Esophagus squamous epithelium (tissue), 5 donors: ENCODE measurements at regions of chr15 and their contacts with region 1.

Region 1: GRCh38 chr15:75229191-75230015 is 27.7 kb downstream of the C15orf39 start:
- DNase-seq: no peak
- H3K4me3 ChIP-seq: no peak overlapping the region
- H3K27ac ChIP-seq: no peak overlapping the region
- H3K4me1 ChIP-seq: no peaks in the 10 kb centered on the region
- H3K27me3 ChIP-seq: peaks cover 0 to 55% (median 0%) of the 10 kb centered on the region in 4 donors
- CTCF ChIP-seq: no peak
- POLR2A ChIP-seq: no peak

Region 2: DNA sequence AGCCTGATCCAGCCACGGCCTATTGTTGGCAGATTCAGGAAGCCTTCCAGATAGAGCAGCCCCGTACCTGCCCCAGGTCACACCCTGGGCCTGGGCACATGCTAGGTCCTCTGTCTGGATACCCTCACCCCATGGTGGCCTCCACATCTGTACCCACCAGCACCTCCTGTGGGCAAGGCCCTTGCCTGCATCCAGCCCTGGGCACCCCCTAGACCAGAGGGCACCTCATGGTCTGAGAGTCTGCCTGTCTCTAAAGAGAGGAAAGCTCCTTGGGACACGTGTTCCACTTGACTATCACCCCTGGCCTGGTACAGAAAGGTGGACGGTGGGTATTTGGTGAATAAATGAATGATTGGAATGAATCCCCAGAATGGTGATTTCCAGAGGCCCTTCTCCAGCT is 97.6 kb after region 1 on chr15:
- intact Hi-C with region 1: loop called (anchors 10 kb)
- DNase-seq: no peak
- H3K4me3 ChIP-seq: no peak overlapping the region
- H3K27ac ChIP-seq: no peak overlapping the region
- H3K4me1 ChIP-seq: no peaks in the 10 kb centered on the region
- H3K27me3 ChIP-seq: no peaks in the 10 kb centered on the region
- CTCF ChIP-seq: no peak
- POLR2A ChIP-seq: no peak